Left ventricle myocardium inferior (tissue), 1 donor: ENCODE measurements at regions of chr6 and their contacts with region 1.

Region 1: DNA sequence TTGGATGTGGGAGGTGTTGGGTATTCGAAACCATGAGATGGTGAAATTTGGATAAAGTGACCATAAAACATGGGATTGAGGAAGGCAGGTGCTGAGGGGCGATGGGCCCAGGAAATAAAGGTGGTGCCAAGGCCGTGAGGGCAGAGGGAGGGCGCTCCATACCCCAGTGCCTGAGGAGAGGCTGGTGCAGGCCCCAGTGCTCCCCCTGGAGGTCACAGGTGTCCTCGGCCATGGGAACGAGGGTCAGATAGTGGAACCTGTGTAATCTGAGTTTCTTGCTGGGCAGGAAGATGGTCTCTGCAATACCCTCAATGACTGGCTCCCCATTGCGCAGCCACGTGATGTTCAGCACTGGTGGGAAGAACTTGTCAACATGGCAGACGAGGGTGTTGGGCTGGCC is 16.2 kb downstream of the HLA-DPB1 start:
- DNase-seq: no peak
- H3K4me3 ChIP-seq: no peak overlapping the region
- H3K27ac ChIP-seq: no peak overlapping the region
- H3K4me1 ChIP-seq: no peaks in the 10 kb centered on the region
- H3K27me3 ChIP-seq: peaks cover 15% of the 10 kb centered on the region
- CTCF ChIP-seq: peak; percentile 65

Region 2: DNA sequence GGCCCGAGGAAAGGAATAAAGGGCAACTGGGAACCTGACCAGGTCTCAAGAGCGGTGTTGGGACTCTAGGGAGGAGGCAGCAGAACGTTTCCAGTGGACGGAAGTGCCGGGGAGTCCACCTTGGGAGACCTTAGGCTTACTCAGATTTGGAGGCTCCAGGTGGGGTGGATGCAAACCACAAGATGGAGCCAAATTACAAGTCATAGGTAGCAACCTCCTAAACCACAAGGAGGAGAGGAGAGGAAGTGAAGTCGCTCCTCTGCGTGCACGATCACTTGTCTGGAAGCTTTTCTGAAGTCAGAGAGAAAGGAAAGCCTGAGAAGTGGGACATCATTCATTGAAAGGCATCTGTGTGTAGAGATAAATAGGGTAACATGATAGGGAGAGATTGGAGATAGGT is 91.9 kb before region 1 on chr6:
- intact Hi-C with region 1: loop called (anchors 5 kb)
- DNase-seq: no peak
- H3K4me3 ChIP-seq: no peak overlapping the region
- H3K27ac ChIP-seq: no peak overlapping the region
- H3K4me1 ChIP-seq: no peaks in the 10 kb centered on the region
- H3K27me3 ChIP-seq: peaks cover 59% of the 10 kb centered on the region
- CTCF ChIP-seq: peak; percentile 49

Region 3: DNA sequence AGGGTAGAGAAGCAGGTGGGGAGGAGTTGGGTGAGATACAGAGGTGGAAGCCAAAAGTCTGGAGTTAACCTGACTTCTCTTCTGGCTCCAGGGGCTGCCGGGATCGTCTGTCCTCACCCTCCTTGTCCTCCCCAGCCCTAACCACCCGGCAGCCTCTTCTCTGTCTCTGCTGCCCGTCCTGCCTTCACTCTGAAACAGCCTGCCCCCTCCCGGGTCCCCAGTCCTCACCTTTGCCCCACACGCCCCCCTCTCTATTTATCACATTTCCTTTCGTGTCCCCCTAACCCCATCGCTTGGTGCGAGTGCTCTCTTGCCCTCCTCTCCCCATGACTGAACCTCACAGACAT is 122.0 kb after region 1 on chr6:
- intact Hi-C with region 1: no loop called
- DNase-seq: no peak
- H3K4me3 ChIP-seq: peak overlapping the region; percentile 75
- H3K27ac ChIP-seq: peak overlapping the region; percentile 68
- H3K4me1 ChIP-seq: peaks cover 25% of the 10 kb centered on the region
- H3K27me3 ChIP-seq: peaks cover 3% of the 10 kb centered on the region
- CTCF ChIP-seq: no peak